ENCODE measurements at regions of chr7 and their contacts with region 1.

Region 1: GRCh38 chr7:101507791-101508252 is 121.3 kb downstream of the MYL10 start:
- DNase-seq: no peak
- H3K4me3 ChIP-seq: no peak overlapping the region
- CTCF ChIP-seq: peak; percentile 55

Region 2: GRCh38 chr7:101465576-101466196 is 42.1 kb before region 1 on chr7:
- CTCF ChIA-PET with region 1: no interaction called
- POLR2A ChIA-PET with region 1: no interaction called
- DNase-seq: no peak
- H3K4me3 ChIP-seq: no peak overlapping the region
- CTCF ChIP-seq: no peak

Region 3: DNA sequence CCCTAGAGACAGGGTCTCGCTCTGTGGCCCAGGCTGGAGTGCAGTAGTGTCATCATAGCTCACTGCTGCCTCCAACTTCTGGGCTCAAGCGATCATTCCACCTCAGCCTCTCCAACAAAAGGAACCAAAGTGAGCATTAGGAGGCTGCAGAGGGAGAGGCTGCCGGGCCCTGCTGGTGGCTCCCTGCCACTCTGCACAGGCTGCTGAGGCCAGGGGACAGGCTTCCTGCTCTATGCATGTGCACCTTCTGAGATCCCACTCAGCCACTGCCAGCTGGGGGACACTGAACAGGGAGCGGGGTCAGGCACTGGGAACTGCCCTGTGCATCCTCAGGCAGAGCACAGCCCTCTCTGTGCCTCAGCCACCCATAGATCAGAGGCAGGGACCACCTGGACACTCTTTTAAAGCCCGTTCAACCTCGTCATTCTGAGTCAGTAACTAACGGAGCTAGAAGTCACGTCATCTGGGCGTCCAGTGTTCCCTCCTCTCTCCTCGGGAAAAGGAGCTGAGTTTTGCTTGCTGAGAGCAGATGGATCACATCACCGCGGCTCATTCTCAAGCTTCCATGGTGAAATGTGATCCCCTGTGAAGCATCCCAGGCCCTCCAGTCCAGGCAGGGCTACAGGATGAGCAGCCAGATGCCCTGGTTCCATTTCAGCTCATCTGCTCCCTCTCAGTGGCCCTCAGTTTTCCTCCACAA is 11.7 kb after region 1 on chr7:
- CTCF ChIA-PET with region 1: interaction called, 20 read pairs
- POLR2A ChIA-PET with region 1: no interaction called
- DNase-seq: peak; percentile 29
- H3K4me3 ChIP-seq: no peak overlapping the region
- CTCF ChIP-seq: no peak

Region 4: GRCh38 chr7:101558742-101559325 is 51.0 kb after region 1 on chr7:
- CTCF ChIA-PET with region 1: no interaction called
- POLR2A ChIA-PET with region 1: no interaction called
- DNase-seq: no peak
- H3K4me3 ChIP-seq: no peak overlapping the region
- CTCF ChIP-seq: no peak